MCF 10A (cell line): ENCODE measurements at regions of chr3 and their contacts with region 1.

Region 1: DNA sequence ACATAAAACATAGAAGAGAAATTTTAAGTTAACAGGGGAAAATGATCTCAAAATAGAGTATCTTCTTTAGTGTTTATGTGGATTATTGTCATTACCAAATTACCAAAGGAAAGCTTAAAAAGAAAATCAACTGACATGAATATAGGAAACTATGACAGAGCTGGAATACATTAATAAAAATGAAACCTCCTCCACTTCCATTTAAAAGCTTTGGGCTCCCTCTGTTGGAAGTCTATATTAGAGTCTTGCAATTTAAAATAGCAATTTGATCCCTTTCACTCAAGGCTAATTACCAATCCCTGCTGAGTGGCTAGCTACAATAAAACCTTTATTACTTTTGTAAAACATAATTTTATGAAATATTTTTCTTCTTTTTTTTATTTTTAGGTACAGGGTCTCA is 61.4 kb upstream of the IMPG2 start:
- DNase-seq: peak; percentile 51
- H3K4me3 Mint-ChIP-seq: no peak overlapping the region
- H3K27ac Mint-ChIP-seq: no peak overlapping the region
- H3K4me1 Mint-ChIP-seq: no peaks in the 10 kb centered on the region
- H3K27me3 Mint-ChIP-seq: no peaks in the 10 kb centered on the region
- CTCF ChIP-seq: peak; percentile 30

Region 2: DNA sequence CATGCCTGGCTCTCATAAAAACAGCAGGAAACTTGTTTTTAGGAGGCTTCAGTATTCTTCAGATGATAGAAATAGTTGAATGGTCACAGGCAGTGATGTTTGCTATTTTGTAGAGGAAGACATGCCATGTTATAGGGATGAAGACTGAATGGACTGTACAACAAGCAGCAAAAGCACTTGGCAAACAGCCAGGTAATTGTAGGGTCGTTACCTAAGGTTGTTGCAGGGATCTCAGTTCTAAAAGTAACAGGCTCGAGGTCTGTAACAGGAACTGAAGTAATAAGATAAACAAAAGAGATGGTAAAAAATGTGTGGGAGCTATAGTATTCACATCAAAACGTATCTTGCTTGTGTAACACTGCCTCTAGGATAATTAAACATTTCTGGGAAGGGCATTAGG is 556.2 kb before region 1 on chr3:
- CTCF ChIA-PET with region 1: no interaction called
- POLR2A ChIA-PET with region 1: no interaction called
- intact Hi-C with region 1: loop called (anchors 5 kb)
- DNase-seq: peak; percentile 23
- H3K4me3 Mint-ChIP-seq: no peak overlapping the region
- H3K27ac Mint-ChIP-seq: no peak overlapping the region
- H3K4me1 Mint-ChIP-seq: no peaks in the 10 kb centered on the region
- H3K27me3 Mint-ChIP-seq: no peaks in the 10 kb centered on the region
- CTCF ChIP-seq: no peak

Region 3: GRCh38 chr3:100893590-100893989 is 488.2 kb before region 1 on chr3:
- CTCF ChIA-PET with region 1: no interaction called
- POLR2A ChIA-PET with region 1: no interaction called
- intact Hi-C with region 1: loop called (anchors 5 kb)
- DNase-seq: peak; percentile 50
- H3K4me3 Mint-ChIP-seq: no peak overlapping the region
- H3K27ac Mint-ChIP-seq: no peak overlapping the region
- H3K4me1 Mint-ChIP-seq: peaks cover 22% of the 10 kb centered on the region
- H3K27me3 Mint-ChIP-seq: no peaks in the 10 kb centered on the region
- CTCF ChIP-seq: peak; percentile 59

Region 4: GRCh38 chr3:101203411-101203810 is 178.4 kb before region 1 on chr3:
- CTCF ChIA-PET with region 1: no interaction called
- POLR2A ChIA-PET with region 1: no interaction called
- intact Hi-C with region 1: loop called (anchors 10 kb)
- DNase-seq: no peak
- H3K4me3 Mint-ChIP-seq: no peak overlapping the region
- H3K27ac Mint-ChIP-seq: no peak overlapping the region
- H3K4me1 Mint-ChIP-seq: no peaks in the 10 kb centered on the region
- H3K27me3 Mint-ChIP-seq: no peaks in the 10 kb centered on the region
- CTCF ChIP-seq: no peak

Region 5: DNA sequence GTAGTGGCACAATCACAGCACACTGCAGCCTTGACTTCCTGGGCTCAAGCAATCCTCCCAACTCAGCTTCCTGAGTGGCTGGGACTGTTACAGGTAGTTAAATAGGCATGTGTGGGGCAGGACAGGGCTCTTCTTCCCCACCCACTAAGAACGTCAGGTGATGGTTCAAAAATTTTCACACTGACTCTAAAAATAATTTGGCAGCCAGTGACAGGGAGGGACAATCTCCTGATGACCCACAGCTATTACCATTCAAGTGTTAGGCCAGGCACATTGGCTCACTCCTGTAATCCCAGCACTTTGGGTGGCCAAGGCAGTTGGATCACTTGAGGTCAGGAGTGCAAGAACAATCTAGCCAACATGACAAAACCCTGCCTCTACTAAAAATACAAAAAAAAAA is 167.7 kb after region 1 on chr3:
- CTCF ChIA-PET with region 1: no interaction called
- POLR2A ChIA-PET with region 1: no interaction called
- intact Hi-C with region 1: no loop called
- DNase-seq: no peak
- H3K4me3 Mint-ChIP-seq: no peak overlapping the region
- H3K27ac Mint-ChIP-seq: no peak overlapping the region
- H3K4me1 Mint-ChIP-seq: no peaks in the 10 kb centered on the region
- H3K27me3 Mint-ChIP-seq: no peaks in the 10 kb centered on the region
- CTCF ChIP-seq: no peak